ENCODE measurements at regions of chr15 and their contacts with region 1.

Region 1: DNA sequence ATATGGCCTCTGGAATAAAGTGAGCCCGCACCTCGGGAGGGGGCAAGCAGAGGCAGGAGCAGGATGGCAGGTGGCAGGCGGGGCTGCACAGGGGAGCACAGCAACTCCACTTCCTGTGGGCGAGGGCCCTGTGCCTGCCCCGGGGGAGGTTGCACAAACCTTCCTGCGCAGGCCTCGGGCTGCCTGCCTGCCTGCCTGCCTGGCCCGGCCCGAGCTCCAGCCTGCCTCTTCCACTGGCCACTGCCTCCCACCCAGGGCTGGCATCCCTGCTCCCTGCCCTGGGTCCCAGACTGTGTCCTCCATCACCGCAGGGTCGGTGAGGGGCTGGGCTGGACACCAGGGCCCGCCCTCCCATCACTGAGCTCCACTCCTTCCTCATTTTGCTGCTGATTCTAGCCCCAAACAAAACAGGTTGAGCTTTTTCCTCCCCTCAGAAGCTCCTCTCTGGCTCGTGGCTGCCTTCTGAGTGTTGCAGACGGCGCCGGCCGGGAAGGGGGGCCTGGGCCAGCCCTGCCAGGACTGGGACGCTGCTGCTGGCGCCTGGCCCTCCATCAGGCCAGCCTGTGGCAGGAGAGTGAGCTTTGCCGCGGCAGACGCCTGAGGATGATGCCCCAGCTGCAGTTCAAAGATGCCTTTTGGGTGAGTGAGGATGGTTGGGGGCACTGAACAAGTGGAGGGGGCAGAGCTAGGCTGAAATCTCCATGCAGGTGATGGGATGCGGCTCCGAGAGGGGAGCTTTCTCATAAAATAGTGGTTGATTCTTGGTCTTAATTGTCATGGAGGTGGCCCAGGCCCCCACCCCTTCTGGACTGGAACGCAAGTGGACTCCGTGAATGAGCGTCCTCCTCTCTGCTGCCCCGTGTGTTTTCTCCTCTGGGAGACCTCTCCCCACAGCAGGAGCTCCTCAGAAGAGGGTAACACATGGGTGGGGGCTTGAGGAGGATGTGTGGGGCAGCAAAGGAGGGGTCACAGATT is at the start of gene PSTPIP1:
- DNase-seq: peak; percentile 56 to 84 (median 73)
- ATAC-seq: peak; percentile 76
- H3K4me3 ChIP-seq: peak within 1 kb of the TSS; percentile 95
- H3K4me3 Mint-ChIP-seq: peak within 1 kb of the TSS; percentile 95
- H3K27ac ChIP-seq: peak within 1 kb of the TSS; percentile 88
- H3K27ac Mint-ChIP-seq: peak within 1 kb of the TSS; percentile 98
- H3K4me1 ChIP-seq: peaks cover 77% of the 10 kb centered on the region
- H3K4me1 Mint-ChIP-seq: peaks cover 75% of the 10 kb centered on the region
- H3K27me3 ChIP-seq: no peaks in the 10 kb centered on the region
- H3K27me3 Mint-ChIP-seq: no peaks in the 10 kb centered on the region
- CTCF ChIP-seq: no peak
- total RNA-seq, gene PSTPIP1: 79.4 to 82.7 TPM

Region 2: GRCh38 chr15:76905013-76905839 is 90.0 kb before region 1 on chr15 and contains the start of gene SCAPER:
- CTCF ChIA-PET with region 1: no interaction called
- POLR2A ChIA-PET with region 1: interaction called, 8 read pairs
- intact Hi-C with region 1: loop called in 1 of 2 experiments (anchors 5 kb)
- DNase-seq: peak; percentile 77 to 96 (median 90)
- ATAC-seq: peak; percentile 89
- H3K4me3 ChIP-seq: peak within 1 kb of the TSS; percentile 83
- H3K4me3 Mint-ChIP-seq: peak within 1 kb of the TSS; percentile 96
- H3K27ac ChIP-seq: peak within 1 kb of the TSS; percentile 60 to 75
- H3K27ac Mint-ChIP-seq: peak within 1 kb of the TSS; percentile 95
- H3K4me1 ChIP-seq: peaks cover 25% of the 10 kb centered on the region
- H3K4me1 Mint-ChIP-seq: peaks cover 31% of the 10 kb centered on the region
- H3K27me3 ChIP-seq: no peaks in the 10 kb centered on the region
- H3K27me3 Mint-ChIP-seq: no peaks in the 10 kb centered on the region
- CTCF ChIP-seq: no peak
- total RNA-seq, gene SCAPER: 40.3 to 41.2 TPM

Region 3: GRCh38 chr15:76973362-76973743 is 21.9 kb before region 1 on chr15:
- CTCF ChIA-PET with region 1: interaction called, 13 read pairs
- POLR2A ChIA-PET with region 1: interaction called, 7 read pairs
- intact Hi-C with region 1: no loop called
- DNase-seq: peak; percentile 50 to 83 (median 60)
- ATAC-seq: peak; percentile 81
- H3K4me3 ChIP-seq: no peak overlapping the region
- H3K4me3 Mint-ChIP-seq: no peak overlapping the region
- H3K27ac ChIP-seq: no peak overlapping the region
- H3K27ac Mint-ChIP-seq: no peak overlapping the region
- H3K4me1 ChIP-seq: peaks cover 17% of the 10 kb centered on the region
- H3K4me1 Mint-ChIP-seq: no peaks in the 10 kb centered on the region
- H3K27me3 ChIP-seq: no peaks in the 10 kb centered on the region
- H3K27me3 Mint-ChIP-seq: no peaks in the 10 kb centered on the region
- CTCF ChIP-seq: peak; percentile 76

Region 4: DNA sequence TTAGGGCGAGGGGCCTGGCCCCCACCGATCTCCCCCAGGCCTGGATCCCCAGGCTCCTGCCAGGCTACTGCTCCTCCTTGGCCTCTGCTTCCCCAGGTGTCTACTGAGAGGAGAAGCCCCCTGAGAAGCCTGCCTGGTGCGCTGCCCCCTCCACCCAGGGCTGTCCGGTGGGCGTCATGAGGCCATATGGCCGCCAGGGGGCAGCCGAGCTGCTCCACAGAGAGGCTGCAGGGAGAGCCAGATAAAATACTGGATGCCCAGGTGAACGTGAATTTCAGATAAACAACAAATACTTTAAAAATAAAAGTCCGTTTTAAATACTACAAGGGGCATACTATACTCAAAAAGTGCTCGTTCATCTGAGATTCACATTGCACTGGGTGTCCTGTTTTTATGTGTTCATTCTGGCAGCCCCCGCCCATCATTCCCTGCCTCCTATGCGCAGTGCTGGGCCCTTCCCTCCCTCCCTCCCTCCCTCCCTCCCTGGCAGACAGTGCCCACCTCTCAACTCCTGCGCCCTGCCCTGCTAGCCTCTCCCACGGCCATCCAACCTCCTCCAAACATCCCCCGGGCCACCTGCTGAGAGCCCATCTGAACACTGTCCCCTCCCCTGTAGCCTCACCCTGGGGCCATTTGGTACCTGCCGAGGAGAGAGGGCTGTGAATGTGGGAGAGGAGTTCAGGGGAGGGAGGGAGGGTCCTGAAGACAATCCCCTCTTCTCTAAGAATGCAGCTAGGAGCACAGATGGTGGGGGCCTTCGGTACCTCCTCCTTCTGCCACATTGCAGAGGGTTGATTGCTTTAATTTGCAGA is 29.2 kb after region 1 on chr15:
- CTCF ChIA-PET with region 1: interaction called, 5 read pairs
- POLR2A ChIA-PET with region 1: interaction called, 124 read pairs
- intact Hi-C with region 1: no loop called
- DNase-seq: peak; percentile 46 to 79 (median 62)
- ATAC-seq: peak; percentile 24
- H3K4me3 ChIP-seq: no peak overlapping the region
- H3K4me3 Mint-ChIP-seq: peak overlapping the region; percentile 48
- H3K27ac ChIP-seq: peak overlapping the region in 1 of 2 donors; percentile 49
- H3K27ac Mint-ChIP-seq: peak overlapping the region; percentile 70
- H3K4me1 ChIP-seq: peaks cover 77% of the 10 kb centered on the region
- H3K4me1 Mint-ChIP-seq: peaks cover 48% of the 10 kb centered on the region
- H3K27me3 ChIP-seq: no peaks in the 10 kb centered on the region
- H3K27me3 Mint-ChIP-seq: no peaks in the 10 kb centered on the region
- CTCF ChIP-seq: peak; percentile 95

Region 5: DNA sequence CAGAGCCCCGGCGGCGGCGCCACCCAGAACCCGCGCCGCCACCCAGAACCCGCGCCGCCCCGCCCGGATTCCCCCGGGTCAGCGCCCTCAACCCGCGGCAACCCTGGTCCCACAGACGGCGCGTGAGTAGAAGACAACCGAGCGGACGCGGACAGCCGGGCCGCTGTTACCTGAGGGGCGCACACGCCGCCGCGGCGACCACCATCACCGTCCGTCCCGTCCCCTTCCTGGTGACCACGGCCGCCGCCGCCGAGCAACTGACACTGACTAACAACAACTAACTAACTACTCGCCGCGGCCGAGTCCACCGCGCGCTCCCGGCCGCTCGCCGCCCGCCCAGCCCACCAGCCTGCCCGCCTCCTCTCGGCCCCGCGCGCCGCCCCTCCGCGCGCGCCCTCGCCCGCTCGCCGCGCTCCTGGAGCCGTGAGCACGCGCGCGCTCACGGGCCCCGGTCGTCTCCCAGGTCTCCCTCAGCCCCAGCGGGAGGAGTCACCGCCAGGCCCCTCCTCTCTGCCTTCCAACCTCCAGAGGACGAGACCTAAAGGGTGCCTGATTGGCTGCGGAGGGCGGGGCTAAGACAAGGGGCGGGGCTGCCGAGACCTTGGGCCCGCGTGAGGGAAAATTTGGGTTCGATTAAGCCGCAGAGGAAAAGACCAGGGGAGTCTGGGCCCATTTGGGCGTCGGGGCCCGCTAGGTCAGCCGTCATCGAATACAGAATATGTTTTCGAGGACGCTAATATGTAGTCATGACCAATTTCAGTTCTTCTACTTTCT is 424.8 kb after region 1 on chr15 and contains the start of gene PEAK1:
- CTCF ChIA-PET with region 1: no interaction called
- POLR2A ChIA-PET with region 1: no interaction called
- intact Hi-C with region 1: loop called in 1 of 2 experiments (anchors 10 kb)
- DNase-seq: peak; percentile 99 to 100 (median 100)
- ATAC-seq: peak; percentile 99
- H3K4me3 ChIP-seq: peak within 1 kb of the TSS; percentile 70
- H3K4me3 Mint-ChIP-seq: peak within 1 kb of the TSS; percentile 99
- H3K27ac ChIP-seq: peak within 1 kb of the TSS; percentile 86 to 87
- H3K27ac Mint-ChIP-seq: peak within 1 kb of the TSS; percentile 96
- H3K4me1 ChIP-seq: peaks cover 14% of the 10 kb centered on the region
- H3K4me1 Mint-ChIP-seq: peaks cover 54% of the 10 kb centered on the region
- H3K27me3 ChIP-seq: no peaks in the 10 kb centered on the region
- H3K27me3 Mint-ChIP-seq: no peaks in the 10 kb centered on the region
- CTCF ChIP-seq: no peak
- total RNA-seq, gene PEAK1: 9.2 to 11.0 TPM

Measured in CD4-positive, alpha-beta T cell (primary cell).